CD8-positive, alpha-beta T cell (primary cell): ENCODE measurements at regions of chr14 and their contacts with region 1.

Region 1: DNA sequence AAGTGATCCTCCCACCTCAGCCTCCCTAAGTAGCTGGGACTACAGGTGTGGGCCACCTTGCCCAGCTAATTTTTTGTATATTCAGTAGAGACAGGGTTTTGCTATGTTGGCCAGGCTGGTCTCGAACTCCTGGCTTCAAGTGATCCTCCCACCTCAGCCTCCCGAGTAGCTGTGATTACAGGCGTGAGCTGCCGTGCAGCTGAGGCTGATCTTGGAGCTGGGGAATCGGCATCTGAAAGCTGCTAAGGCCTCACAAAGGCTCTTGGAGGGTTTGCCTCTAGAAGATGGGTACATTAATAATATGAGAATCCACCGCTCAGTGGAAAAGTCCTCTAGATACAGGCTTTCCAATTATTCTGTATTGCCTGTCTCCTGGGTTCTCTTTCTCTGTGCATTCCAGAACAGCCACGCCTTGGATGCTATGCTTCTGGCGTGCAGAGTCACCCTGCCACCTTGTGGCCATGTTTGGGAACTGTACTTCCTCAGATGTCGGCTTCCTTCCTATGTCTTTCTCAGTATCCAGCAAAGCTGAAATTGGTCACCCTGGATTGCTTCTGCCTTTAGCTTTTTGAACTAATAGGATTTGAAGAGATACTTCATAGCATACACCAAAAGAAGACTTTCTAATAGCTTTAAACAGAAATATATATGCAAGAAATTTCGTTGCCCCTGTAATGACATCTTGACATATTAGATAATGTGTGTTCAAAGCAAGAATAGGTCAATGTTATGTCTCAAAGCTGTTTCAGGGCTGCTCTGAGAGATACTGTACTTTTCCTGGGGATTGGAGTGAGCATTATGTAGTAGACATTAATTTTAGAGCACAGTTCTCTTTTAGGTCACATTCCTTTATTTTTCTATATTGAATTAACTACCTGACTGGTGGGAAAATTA is 75.4 kb downstream of the SNAPC1 start:
- DNase-seq: peak; percentile 42 to 86 (median 75)
- ATAC-seq: peak; percentile 99
- H3K4me3 ChIP-seq: no peak overlapping the region
- H3K4me3 Mint-ChIP-seq: no peak overlapping the region
- H3K27ac ChIP-seq: no peak overlapping the region
- H3K27ac Mint-ChIP-seq: no peak overlapping the region
- H3K4me1 ChIP-seq: no peaks in the 10 kb centered on the region
- H3K4me1 Mint-ChIP-seq: no peaks in the 10 kb centered on the region
- H3K27me3 ChIP-seq: no peaks in the 10 kb centered on the region
- H3K27me3 Mint-ChIP-seq: peaks cover 2% of the 10 kb centered on the region
- CTCF ChIP-seq: peak; percentile 86

Region 2: DNA sequence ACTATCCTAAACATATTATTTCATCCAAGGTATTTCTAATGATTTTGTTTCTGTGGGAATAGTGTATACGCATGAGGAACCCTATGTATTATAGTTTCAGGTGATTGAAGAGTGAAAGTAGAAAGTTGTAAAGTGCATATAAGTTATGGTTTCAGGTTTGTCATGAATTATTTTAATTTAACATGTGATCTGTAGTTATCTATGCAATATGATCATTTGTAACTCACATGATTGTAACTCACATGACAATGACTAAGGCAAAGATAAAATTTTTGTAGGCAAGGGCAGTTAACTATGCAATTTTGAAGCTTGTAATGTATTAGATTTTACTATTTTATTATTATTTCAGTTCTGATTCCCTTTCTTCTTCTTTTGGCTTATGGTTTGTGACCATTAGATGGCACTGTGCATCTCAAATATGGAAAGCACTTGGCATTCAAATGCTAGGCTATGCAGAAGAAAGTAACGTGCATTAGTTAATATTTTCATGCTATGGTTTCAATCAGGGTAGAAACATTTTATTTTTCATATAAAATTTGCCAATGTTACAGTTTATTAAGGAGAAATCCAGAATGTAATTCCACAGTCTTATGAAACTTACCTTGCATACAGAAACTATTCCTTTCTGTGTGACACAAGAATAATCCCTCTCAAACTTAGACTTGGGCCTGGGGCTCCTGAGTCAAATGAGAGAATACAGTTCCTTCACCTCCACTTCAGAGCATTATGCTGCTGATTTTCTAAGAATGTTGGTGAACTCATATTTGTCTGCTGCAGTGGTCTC is 540.7 kb before region 1 on chr14:
- CTCF ChIA-PET with region 1: interaction called, 12 read pairs
- POLR2A ChIA-PET with region 1: no interaction called
- intact Hi-C with region 1: loop called (anchors 1 kb)
- DNase-seq: peak in 2 of 9 experiments; percentile 69 to 79
- ATAC-seq: peak; percentile 73
- H3K4me3 ChIP-seq: no peak overlapping the region
- H3K4me3 Mint-ChIP-seq: no peak overlapping the region
- H3K27ac ChIP-seq: peak overlapping the region in 1 of 2 experiments; percentile 40
- H3K27ac Mint-ChIP-seq: peak overlapping the region; percentile 78
- H3K4me1 ChIP-seq: peaks cover 39% of the 10 kb centered on the region
- H3K4me1 Mint-ChIP-seq: peaks cover 54% of the 10 kb centered on the region
- H3K27me3 ChIP-seq: no peaks in the 10 kb centered on the region
- H3K27me3 Mint-ChIP-seq: no peaks in the 10 kb centered on the region
- CTCF ChIP-seq: peak; percentile 89

Region 3: GRCh38 chr14:61475316-61475715 is 362.3 kb before region 1 on chr14:
- CTCF ChIA-PET with region 1: interaction called, 13 read pairs
- POLR2A ChIA-PET with region 1: no interaction called
- intact Hi-C with region 1: no loop called
- DNase-seq: peak in 3 of 9 experiments; percentile 39 to 80 (median 69)
- ATAC-seq: no peak
- H3K4me3 ChIP-seq: no peak overlapping the region
- H3K4me3 Mint-ChIP-seq: no peak overlapping the region
- H3K27ac ChIP-seq: peak overlapping the region; percentile 72 to 98
- H3K27ac Mint-ChIP-seq: peak overlapping the region; percentile 97
- H3K4me1 ChIP-seq: peaks cover 95% of the 10 kb centered on the region
- H3K4me1 Mint-ChIP-seq: peaks cover 93% of the 10 kb centered on the region
- H3K27me3 ChIP-seq: no peaks in the 10 kb centered on the region
- H3K27me3 Mint-ChIP-seq: no peaks in the 10 kb centered on the region
- CTCF ChIP-seq: peak; percentile 45

Region 4: GRCh38 chr14:61744239-61744638 is 93.3 kb before region 1 on chr14:
- CTCF ChIA-PET with region 1: interaction called, 16 read pairs
- POLR2A ChIA-PET with region 1: no interaction called
- intact Hi-C with region 1: no loop called
- DNase-seq: no peak
- ATAC-seq: no peak
- H3K4me3 ChIP-seq: no peak overlapping the region
- H3K4me3 Mint-ChIP-seq: no peak overlapping the region
- H3K27ac ChIP-seq: no peak overlapping the region
- H3K27ac Mint-ChIP-seq: no peak overlapping the region
- H3K4me1 ChIP-seq: no peaks in the 10 kb centered on the region
- H3K4me1 Mint-ChIP-seq: no peaks in the 10 kb centered on the region
- H3K27me3 ChIP-seq: no peaks in the 10 kb centered on the region
- H3K27me3 Mint-ChIP-seq: no peaks in the 10 kb centered on the region
- CTCF ChIP-seq: no peak

Region 5: DNA sequence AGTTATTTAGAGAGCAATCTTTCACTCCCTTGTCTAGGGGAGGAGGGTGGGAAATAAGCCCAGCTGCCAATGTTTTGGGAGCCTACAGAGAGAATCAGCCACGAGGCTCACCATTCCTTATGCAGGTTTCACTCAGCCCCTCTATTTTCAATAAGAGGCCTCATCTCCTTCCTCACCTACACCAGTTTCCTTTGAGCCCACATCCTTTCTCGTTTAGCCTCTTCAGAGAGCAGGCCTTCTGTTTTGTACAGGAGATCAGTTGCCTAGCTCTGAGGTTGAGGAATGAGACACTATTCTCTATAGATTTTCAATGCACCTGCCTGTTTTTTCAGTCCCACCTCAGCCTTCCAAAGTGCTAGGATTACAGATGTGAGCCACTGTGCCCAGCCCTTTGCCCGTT is 57.5 kb before region 1 on chr14:
- CTCF ChIA-PET with region 1: interaction called, 14 read pairs
- POLR2A ChIA-PET with region 1: no interaction called
- intact Hi-C with region 1: no loop called
- DNase-seq: peak in 2 of 9 experiments; percentile 37 to 49
- ATAC-seq: peak; percentile 67
- H3K4me3 ChIP-seq: no peak overlapping the region
- H3K4me3 Mint-ChIP-seq: peak overlapping the region; percentile 61
- H3K27ac ChIP-seq: peak overlapping the region in 1 of 2 experiments; percentile 29
- H3K27ac Mint-ChIP-seq: peak overlapping the region; percentile 84
- H3K4me1 ChIP-seq: peaks cover 30% of the 10 kb centered on the region
- H3K4me1 Mint-ChIP-seq: peaks cover 31% of the 10 kb centered on the region
- H3K27me3 ChIP-seq: no peaks in the 10 kb centered on the region
- H3K27me3 Mint-ChIP-seq: no peaks in the 10 kb centered on the region
- CTCF ChIP-seq: no peak

Region 6: DNA sequence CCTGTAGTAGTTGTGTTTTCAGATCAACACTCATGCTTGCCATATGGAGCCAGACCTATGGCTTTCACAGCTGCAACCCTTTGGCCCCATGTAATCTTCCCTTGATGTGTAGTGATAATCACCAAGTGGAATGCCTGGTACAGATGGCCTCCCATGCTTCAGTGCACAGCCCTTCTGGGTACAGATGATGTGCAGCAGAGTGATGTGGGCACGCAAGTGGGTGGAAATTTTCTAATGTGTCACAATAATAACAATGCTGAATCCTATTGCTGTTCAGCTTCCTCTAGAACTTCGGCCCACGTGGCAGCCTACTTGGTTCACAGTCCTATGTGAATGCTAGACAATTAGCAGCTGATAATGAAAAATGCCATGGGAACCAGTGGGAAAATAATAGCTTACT is 112.8 kb after region 1 on chr14:
- CTCF ChIA-PET with region 1: no interaction called
- POLR2A ChIA-PET with region 1: no interaction called
- intact Hi-C with region 1: no loop called
- DNase-seq: no peak
- ATAC-seq: no peak
- H3K4me3 ChIP-seq: no peak overlapping the region
- H3K4me3 Mint-ChIP-seq: no peak overlapping the region
- H3K27ac ChIP-seq: no peak overlapping the region
- H3K27ac Mint-ChIP-seq: no peak overlapping the region
- H3K4me1 ChIP-seq: no peaks in the 10 kb centered on the region
- H3K4me1 Mint-ChIP-seq: no peaks in the 10 kb centered on the region
- H3K27me3 ChIP-seq: no peaks in the 10 kb centered on the region
- H3K27me3 Mint-ChIP-seq: peaks cover 4% of the 10 kb centered on the region
- CTCF ChIP-seq: no peak